ENCODE measurements at regions of chr19 and their contacts with region 1.

Region 1: DNA sequence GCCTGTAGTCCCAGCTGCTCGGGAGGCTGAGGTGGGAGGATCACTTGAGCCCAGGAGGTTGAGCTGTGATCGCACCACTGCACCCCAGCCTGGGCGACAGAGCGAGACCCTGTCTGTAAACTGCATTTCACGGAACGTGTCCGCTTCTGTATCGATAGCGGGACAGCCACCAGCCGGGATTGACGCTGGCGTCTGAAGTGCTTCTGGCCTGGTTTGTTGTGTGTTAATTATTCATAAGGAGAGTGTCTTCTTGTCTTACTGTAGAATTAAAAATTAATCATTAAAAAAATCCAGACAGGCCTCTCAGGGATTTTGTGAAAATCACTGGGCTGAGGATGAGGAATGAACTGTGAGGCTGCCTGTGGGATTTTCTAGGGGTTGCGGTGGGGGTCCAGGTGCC is 16.2 kb upstream of the MISP start:
- DNase-seq: no peak
- H3K4me3 ChIP-seq: no peak overlapping the region
- H3K27ac ChIP-seq: no peak overlapping the region
- H3K4me1 ChIP-seq: no peaks in the 10 kb centered on the region
- H3K27me3 ChIP-seq: no peaks in the 10 kb centered on the region
- CTCF ChIP-seq: no peak
- POLR2A ChIP-seq: no peak

Region 2: GRCh38 chr19:588093-588740 is 146.5 kb before region 1 on chr19:
- CTCF ChIA-PET with region 1: interaction called, 20 read pairs
- POLR2A ChIA-PET with region 1: no interaction called
- dilution Hi-C with region 1: no loop called
- intact Hi-C with region 1: loop called (anchors 2 kb)
- DNase-seq: peak; percentile 59
- H3K4me3 ChIP-seq: no peak overlapping the region
- H3K27ac ChIP-seq: no peak overlapping the region
- H3K4me1 ChIP-seq: no peaks in the 10 kb centered on the region
- H3K27me3 ChIP-seq: peaks cover 10 to 13% of the 10 kb centered on the region in 2 experiments
- CTCF ChIP-seq: peak; percentile 62 to 78
- POLR2A ChIP-seq: no peak

Region 3: GRCh38 chr19:670609-671075 is 64.1 kb before region 1 on chr19:
- CTCF ChIA-PET with region 1: interaction called, 49 read pairs
- POLR2A ChIA-PET with region 1: interaction called, 4 read pairs
- dilution Hi-C with region 1: no loop called
- intact Hi-C with region 1: loop called (anchors 1 kb)
- DNase-seq: no peak
- H3K4me3 ChIP-seq: no peak overlapping the region
- H3K27ac ChIP-seq: no peak overlapping the region
- H3K4me1 ChIP-seq: no peaks in the 10 kb centered on the region
- H3K27me3 ChIP-seq: no peaks in the 10 kb centered on the region
- CTCF ChIP-seq: no peak
- POLR2A ChIP-seq: no peak

Region 4: DNA sequence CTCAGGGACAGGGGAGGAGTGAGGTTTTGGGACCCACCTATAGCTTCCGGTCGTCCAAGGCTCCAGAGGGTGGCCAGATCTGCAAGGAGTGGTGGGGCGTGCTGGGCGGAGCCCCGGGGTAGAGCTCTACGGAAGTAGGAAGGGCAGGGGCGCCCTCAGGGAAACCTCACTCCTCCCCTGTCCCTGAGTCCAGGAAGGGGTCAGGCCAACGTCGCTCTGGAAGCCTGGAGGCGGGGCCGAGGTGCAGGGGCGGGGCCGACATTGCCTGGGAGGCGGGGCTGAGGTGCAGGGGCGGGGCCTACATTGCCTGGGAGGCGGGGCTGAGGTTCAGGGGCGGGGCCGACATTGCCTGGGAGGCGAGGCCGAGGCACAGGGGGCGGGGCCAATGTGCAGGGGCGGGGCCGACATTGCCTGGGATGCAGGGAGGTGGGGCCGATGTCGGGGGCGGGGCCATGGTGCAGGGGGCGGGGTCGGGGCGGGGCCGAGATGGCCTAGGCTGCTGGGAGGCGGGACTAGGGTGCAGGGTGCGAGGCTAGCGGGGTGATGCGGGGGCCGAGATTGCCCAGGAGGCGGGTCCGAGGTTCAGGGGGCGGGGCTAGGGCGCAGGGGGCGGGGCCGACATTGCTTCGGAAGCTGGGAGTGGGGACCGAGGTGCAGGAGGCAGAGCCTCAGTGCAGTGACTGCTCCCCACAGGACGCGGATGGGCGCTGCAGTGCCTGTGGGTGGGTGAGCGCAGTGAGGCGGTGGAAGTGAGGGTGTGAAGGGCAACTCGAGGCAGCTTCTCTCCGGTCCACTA is 30.9 kb before region 1 on chr19:
- CTCF ChIA-PET with region 1: interaction called, 18 read pairs
- POLR2A ChIA-PET with region 1: no interaction called
- dilution Hi-C with region 1: no loop called
- intact Hi-C with region 1: no loop called
- DNase-seq: peak; percentile 22
- H3K4me3 ChIP-seq: no peak overlapping the region
- H3K27ac ChIP-seq: no peak overlapping the region
- H3K4me1 ChIP-seq: peaks cover 3% of the 10 kb centered on the region
- H3K27me3 ChIP-seq: peaks cover 0 to 3% of the 10 kb centered on the region in 2 experiments
- CTCF ChIP-seq: no peak
- POLR2A ChIP-seq: no peak

Region 5: DNA sequence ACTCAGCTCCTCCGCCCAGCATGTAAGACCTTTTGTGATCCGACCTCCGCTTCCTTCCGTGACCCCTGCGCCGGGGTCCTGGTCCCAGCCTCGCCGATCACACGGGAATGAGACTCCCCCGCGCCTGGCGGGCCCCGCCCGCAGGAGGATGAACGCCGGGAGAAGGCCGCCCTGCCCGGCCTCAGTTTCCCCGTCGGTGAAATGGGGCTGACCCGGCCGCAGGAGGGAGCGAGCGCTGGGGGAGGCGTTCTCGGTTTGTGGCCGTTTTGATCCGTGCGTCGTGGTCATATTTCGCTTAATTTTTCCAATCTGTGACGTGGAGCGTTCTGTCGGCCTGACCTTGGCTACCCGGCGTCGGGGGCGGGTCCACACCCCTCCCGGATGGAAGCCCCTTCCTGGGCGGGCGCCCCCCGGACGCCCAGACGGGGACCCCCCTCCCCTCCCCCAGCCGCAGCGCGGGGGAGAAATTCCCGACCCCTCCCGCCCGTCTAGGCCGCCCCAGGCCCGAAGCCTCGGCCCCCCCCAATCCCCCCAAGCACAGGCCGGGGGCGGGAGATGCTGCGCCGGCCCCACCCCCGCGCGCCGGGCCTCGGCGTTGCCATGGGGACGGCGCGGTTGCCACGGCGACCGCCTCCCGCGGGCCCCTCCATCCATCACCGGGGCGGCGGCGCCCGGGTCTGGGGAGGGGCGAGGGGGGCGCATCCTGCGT is 14.9 kb before region 1 on chr19:
- CTCF ChIA-PET with region 1: interaction called, 10 read pairs
- POLR2A ChIA-PET with region 1: no interaction called
- dilution Hi-C with region 1: no loop called
- intact Hi-C with region 1: no loop called
- DNase-seq: no peak
- H3K4me3 ChIP-seq: no peak overlapping the region
- H3K27ac ChIP-seq: no peak overlapping the region
- H3K4me1 ChIP-seq: no peaks in the 10 kb centered on the region
- H3K27me3 ChIP-seq: no peaks in the 10 kb centered on the region
- CTCF ChIP-seq: no peak
- POLR2A ChIP-seq: no peak